Esophagus muscularis mucosa (tissue), 4 donors: ENCODE measurements at regions of chr21 and their contacts with region 1.

Region 1: DNA sequence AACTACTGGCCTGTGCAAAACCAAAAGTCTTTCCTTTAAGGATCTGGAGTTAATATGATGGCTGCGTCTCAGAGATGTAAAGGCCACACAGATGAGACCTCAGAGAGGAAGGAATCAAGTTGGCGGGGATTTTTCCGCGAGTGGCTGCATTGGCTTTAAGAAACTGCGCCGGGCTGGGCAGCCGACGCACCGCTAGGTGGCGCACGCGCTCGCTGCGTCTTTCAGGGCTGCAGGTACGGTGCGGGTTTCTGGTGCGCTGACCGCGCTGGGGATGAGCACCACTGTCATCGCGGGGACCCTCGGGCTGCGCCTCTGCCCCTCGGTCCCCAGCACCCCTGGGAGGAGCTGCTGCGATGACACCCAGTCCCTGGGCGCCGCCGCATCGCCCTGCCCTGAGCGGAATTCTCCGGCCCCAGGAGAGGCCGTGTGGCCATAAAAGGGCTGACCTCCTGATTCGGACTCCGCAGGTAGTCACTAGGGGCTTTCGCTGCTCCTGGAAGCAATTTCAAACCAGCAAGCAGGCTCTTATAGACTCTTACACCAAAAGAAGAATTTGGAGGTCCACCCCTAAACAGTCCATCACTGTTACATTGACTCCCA is 241.0 kb downstream of the KCNJ6 start:
- DNase-seq: no peak
- H3K4me3 ChIP-seq: peak overlapping the region; percentile 13 to 48 (median 21)
- H3K27ac ChIP-seq: no peak overlapping the region
- H3K4me1 ChIP-seq: peaks cover 4 to 10% (median 6%) of the 10 kb centered on the region in 4 donors
- H3K27me3 ChIP-seq: peaks cover 0 to 23% (median 0%) of the 10 kb centered on the region in 4 donors
- CTCF ChIP-seq: peak in 2 of 3 experiments; percentile 68 to 87
- EP300 ChIP-seq: no peak
- POLR2A ChIP-seq: no peak

Region 2: GRCh38 chr21:36989699-36990507 is 685.4 kb before region 1 on chr21:
- intact Hi-C with region 1: no loop called
- DNase-seq: peak; percentile 95
- H3K4me3 ChIP-seq: peak overlapping the region; percentile 68 to 74 (median 69)
- H3K27ac ChIP-seq: peak overlapping the region; percentile 89 to 95 (median 93)
- H3K4me1 ChIP-seq: peaks cover 0 to 12% (median 6%) of the 10 kb centered on the region in 4 donors
- H3K27me3 ChIP-seq: peaks cover 0 to 22% (median 3%) of the 10 kb centered on the region in 4 donors
- CTCF ChIP-seq: peak in 2 of 3 experiments; percentile 79 to 97
- EP300 ChIP-seq: no peak
- POLR2A ChIP-seq: no peak

Region 3: GRCh38 chr21:38126669-38127303 is 451.5 kb after region 1 on chr21:
- intact Hi-C with region 1: loop called (anchors 10 kb)
- DNase-seq: no peak
- H3K4me3 ChIP-seq: no peak overlapping the region
- H3K27ac ChIP-seq: no peak overlapping the region
- H3K4me1 ChIP-seq: no peaks in the 10 kb centered on the region
- H3K27me3 ChIP-seq: peaks cover 0 to 18% (median 0%) of the 10 kb centered on the region in 4 donors
- CTCF ChIP-seq: peak; percentile 24 to 47 (median 36)
- EP300 ChIP-seq: no peak
- POLR2A ChIP-seq: no peak

Region 4: DNA sequence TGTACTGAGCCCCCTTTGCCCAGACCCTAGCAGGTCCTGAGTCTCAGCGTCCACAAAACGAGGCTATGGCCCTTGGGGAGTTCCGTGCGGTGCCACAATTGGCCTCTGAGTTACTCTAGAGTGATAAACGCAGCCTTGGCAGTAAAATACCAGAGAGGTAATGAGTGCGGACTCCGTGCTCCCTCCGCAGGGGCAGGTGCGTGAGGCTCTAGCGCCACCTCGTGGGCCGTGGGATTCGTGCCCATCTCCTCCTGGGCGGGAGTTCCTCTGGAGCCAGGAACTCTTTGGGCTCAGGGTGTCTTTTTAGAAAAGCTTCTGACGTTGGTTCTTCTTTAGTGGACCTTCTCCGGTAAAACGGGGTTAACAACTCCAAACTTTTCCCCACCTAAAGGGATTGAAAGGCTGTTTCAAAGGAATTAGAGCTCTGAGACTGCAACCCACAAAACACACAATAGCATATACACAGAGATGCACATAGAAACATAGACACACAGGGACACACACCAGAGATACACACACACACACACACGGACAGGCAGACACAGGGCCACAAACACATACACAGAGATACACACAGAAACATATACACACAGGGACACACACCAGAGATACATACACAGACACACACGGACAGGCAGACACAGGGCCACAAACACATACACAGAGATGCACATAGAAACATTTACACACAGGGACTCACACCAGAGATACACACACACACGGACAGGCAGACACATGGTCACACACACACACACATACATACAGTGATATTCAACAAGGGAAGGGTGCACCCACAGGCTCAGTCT is 680.9 kb after region 1 on chr21:
- intact Hi-C with region 1: loop called (anchors 10 kb)
- DNase-seq: no peak
- H3K4me3 ChIP-seq: no peak overlapping the region
- H3K27ac ChIP-seq: no peak overlapping the region
- H3K4me1 ChIP-seq: peaks cover 4 to 10% (median 8%) of the 10 kb centered on the region in 4 donors
- H3K27me3 ChIP-seq: peaks cover 0 to 18% (median 0%) of the 10 kb centered on the region in 4 donors
- CTCF ChIP-seq: peak; percentile 74 to 83 (median 78)
- EP300 ChIP-seq: no peak
- POLR2A ChIP-seq: no peak